Activated T-helper 1 cell treated with anti-CD3 and anti-CD28 coated beads, Interleukin-12 subunit alpha, Interleukin-12 subunit beta, Interleukin-2, Interleukin-4 antibody, amounts not matched to agents 30 ng/mL and 10 ng/mL and 1 ng/mL, durations not matched to agents 14 hours and 24 hours and 36 hours (primary cell): ENCODE measurements at regions of chr5 and their contacts with region 1.

Region 1: GRCh38 chr5:64811050-64811640 is 42.4 kb downstream of the CWC27 start:
- DNase-seq: no peak
- H3K4me3 Mint-ChIP-seq: no peak overlapping the region
- H3K27ac Mint-ChIP-seq: no peak overlapping the region
- H3K4me1 Mint-ChIP-seq: peaks cover 9% of the 10 kb centered on the region
- H3K27me3 Mint-ChIP-seq: no peaks in the 10 kb centered on the region

Region 2: DNA sequence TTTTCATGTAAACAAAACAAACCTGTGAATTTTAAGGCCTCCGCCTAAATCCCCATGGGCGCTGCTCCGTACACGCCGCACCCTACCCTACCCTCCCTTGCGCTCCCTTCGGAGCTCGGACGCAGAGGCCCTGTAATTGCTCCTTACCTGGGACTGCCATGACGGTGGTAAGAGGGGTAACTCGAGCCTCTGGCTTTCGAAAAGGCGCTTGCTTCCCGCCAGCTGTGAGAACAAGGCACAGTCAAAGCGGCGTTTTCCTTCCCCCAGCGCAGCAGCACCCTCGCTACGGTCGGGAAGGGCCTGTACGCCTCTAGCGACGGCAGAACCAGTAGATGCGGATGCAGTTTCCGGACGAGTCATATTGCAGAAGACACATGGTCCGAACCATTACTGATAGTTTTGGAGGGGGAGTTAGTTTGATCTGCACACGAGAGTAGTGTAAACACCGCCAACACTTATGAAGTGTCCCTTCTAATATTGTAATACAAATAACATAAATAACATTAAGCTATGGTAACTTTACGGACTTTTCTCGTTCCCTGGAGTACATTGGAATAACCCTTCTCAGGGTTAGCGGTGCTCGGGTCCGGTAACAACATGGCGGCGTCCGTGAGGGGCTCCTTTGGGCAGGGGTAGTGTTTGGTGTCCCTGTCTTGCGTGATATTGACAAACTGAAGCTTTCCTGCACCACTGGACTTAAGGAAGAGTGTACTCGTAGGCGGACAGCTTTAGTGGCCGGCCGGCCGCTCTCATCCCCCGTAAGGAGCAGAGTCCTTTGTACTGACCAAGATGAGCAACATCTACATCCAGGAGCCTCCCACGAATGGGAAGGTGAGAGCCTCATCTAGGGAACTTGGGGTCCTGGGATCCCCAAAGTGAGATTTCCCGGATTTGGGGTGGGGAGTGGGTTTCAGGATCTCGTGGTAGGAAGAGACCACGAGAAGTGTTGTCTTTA is 42.5 kb before region 1 on chr5 and contains the starts of genes CWC27 and SREK1IP1:
- intact Hi-C with region 1: no loop called
- DNase-seq: peak; percentile 79
- H3K4me3 Mint-ChIP-seq: peak within 1 kb of the TSS; percentile 98
- H3K27ac Mint-ChIP-seq: peak within 1 kb of the TSS; percentile 96
- H3K4me1 Mint-ChIP-seq: peaks cover 51% of the 10 kb centered on the region
- H3K27me3 Mint-ChIP-seq: no peaks in the 10 kb centered on the region
- total RNA-seq, gene CWC27: 29.1 and 33.5 TPM in 2 replicates
- total RNA-seq, gene SREK1IP1: 29.4 and 31.7 TPM in 2 replicates

Region 3: GRCh38 chr5:64836190-64836755 is 25.1 kb after region 1 on chr5:
- intact Hi-C with region 1: loop called (anchors 2 kb)
- DNase-seq: no peak
- H3K4me3 Mint-ChIP-seq: no peak overlapping the region
- H3K27ac Mint-ChIP-seq: peak overlapping the region; percentile 13
- H3K4me1 Mint-ChIP-seq: peaks cover 8% of the 10 kb centered on the region
- H3K27me3 Mint-ChIP-seq: no peaks in the 10 kb centered on the region

Region 4: GRCh38 chr5:64900618-64901017 is 89.5 kb after region 1 on chr5:
- intact Hi-C with region 1: no loop called
- DNase-seq: no peak
- H3K4me3 Mint-ChIP-seq: no peak overlapping the region
- H3K27ac Mint-ChIP-seq: no peak overlapping the region
- H3K4me1 Mint-ChIP-seq: no peaks in the 10 kb centered on the region
- H3K27me3 Mint-ChIP-seq: no peaks in the 10 kb centered on the region

Region 5: GRCh38 chr5:65076251-65076869 is 265.2 kb after region 1 on chr5:
- intact Hi-C with region 1: loop called (anchors 1 kb)
- DNase-seq: peak; percentile 44
- H3K4me3 Mint-ChIP-seq: no peak overlapping the region
- H3K27ac Mint-ChIP-seq: no peak overlapping the region
- H3K4me1 Mint-ChIP-seq: peaks cover 21% of the 10 kb centered on the region
- H3K27me3 Mint-ChIP-seq: peaks cover 18% of the 10 kb centered on the region

Region 6: DNA sequence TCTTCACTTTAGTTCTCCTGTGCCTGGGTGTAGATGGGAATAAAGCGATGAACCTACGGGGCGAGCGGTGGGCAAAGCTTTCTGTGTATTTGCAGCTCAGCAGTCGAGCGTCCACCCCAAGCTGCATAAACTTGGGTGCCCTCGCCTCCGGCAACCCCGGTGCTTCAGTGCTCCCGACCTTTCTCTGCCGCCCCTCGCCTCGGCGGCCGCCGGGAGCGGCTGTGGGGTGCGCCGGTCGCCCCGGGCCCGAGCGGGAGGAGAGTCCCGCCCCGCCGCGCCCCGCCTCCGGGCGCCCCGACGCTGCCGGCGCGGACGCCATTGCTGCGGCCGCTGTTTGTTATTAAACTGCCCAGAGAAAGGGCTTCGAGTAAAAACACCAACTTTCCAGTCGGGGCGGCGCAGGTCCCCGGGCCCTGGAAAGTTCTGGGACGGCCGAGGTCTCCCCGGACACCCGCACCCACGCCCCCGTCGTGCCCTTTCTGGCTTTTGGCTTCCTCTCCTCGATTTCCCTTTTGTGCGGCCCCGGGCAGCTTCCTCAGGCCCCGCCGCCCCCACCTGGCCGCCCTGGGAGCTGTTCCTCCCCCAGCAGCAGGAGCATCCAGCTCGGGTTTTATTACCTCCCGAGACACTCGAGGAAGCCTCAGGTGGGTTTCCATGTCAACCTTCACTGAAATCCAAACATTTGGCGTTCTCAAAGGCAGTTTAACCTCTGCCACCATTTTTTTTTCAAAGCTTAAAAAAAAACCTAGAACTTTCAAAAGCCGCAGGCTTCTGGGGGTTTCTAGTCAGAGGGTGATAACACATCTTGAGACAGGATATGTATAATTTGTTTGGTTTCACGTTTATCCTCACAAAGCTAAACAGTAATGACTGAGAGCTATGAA is 291.9 kb after region 1 on chr5:
- intact Hi-C with region 1: loop called (anchors 2 kb)
- DNase-seq: no peak
- H3K4me3 Mint-ChIP-seq: peak overlapping the region; percentile 79
- H3K27ac Mint-ChIP-seq: peak overlapping the region; percentile 42
- H3K4me1 Mint-ChIP-seq: peaks cover 30% of the 10 kb centered on the region
- H3K27me3 Mint-ChIP-seq: peaks cover 25% of the 10 kb centered on the region

Region 7: GRCh38 chr5:65190328-65191053 is 379.3 kb after region 1 on chr5:
- intact Hi-C with region 1: loop called (anchors 5 kb)
- DNase-seq: no peak
- H3K4me3 Mint-ChIP-seq: no peak overlapping the region
- H3K27ac Mint-ChIP-seq: peak overlapping the region; percentile 30
- H3K4me1 Mint-ChIP-seq: no peaks in the 10 kb centered on the region
- H3K27me3 Mint-ChIP-seq: peaks cover 4% of the 10 kb centered on the region

Region 8: DNA sequence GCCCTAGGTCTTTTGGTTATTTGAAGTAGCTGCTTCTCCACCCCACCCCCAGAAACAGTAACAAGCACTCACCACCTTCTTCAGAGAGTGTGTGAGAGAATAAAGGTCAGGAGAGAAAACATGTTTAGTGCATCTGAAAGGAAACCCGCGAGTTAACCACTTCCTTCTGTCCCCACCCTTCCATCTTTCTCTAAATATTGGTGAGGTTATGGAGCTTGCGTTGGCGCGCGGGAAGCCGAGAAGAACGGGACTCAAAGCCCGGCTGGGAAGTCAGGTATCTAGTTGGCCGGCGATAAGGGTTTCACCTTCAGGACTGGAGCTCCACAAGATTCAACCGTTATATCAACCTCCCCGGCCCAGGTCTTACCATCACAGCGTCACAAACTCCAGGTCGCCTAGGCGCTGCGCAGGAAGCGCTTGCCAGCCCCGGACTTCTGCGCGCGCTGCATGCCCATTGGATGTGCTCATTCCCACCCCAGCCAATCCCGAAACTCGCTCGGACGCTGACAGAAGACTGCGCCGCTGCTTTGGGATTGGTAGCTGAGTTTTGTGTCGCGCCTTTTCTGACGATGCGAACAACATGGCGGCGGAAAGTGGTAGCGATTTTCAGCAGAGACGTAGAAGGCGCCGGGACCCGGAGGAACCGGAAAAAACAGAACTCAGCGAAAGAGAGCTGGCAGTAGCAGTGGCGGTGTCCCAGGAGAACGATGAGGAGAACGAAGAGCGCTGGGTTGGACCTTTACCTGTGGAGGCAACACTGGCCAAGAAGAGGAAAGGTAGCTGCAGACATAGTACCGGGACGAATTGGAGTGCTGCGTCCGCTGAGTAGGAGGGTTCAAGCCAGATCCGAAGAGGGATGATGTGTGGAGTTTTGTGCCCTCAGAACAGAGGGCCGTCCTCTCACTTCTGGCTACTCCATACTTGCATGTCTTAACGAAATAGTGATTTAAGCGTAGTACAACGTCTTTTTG is 751.9 kb after region 1 on chr5 and contains the starts of genes CENPK and PPWD1:
- intact Hi-C with region 1: loop called (anchors 1 kb)
- DNase-seq: peak; percentile 94
- H3K4me3 Mint-ChIP-seq: peak within 1 kb of the TSS; percentile 95
- H3K27ac Mint-ChIP-seq: peak within 1 kb of the TSS; percentile 99
- H3K4me1 Mint-ChIP-seq: peaks cover 53% of the 10 kb centered on the region
- H3K27me3 Mint-ChIP-seq: no peaks in the 10 kb centered on the region
- total RNA-seq, gene CENPK: 81.0 and 85.1 TPM in 2 replicates
- total RNA-seq, gene PPWD1: 63.6 and 65.4 TPM in 2 replicates

Region 9: GRCh38 chr5:66171349-66172344 is 1360.5 kb after region 1 on chr5:
- intact Hi-C with region 1: loop called (anchors 5 kb)
- DNase-seq: peak; percentile 30
- H3K4me3 Mint-ChIP-seq: no peak overlapping the region
- H3K27ac Mint-ChIP-seq: peak overlapping the region; percentile 40
- H3K4me1 Mint-ChIP-seq: peaks cover 29% of the 10 kb centered on the region
- H3K27me3 Mint-ChIP-seq: no peaks in the 10 kb centered on the region